CD4-positive, alpha-beta T cell (primary cell): ENCODE measurements at regions of chr5 and their contacts with region 1.

Region 1: GRCh38 chr5:39106322-39106721 is 32.1 kb upstream of the RICTOR start:
- DNase-seq: peak in 3 of 14 experiments; percentile 21 to 36 (median 35)
- ATAC-seq: no peak
- H3K4me3 ChIP-seq: no peak overlapping the region
- H3K4me3 Mint-ChIP-seq: no peak overlapping the region
- H3K27ac ChIP-seq: no peak overlapping the region
- H3K27ac Mint-ChIP-seq: peak overlapping the region; percentile 70
- H3K4me1 ChIP-seq: peaks cover under 1% of the 10 kb centered on the region
- H3K4me1 Mint-ChIP-seq: peaks cover 39% of the 10 kb centered on the region
- H3K27me3 ChIP-seq: no peaks in the 10 kb centered on the region
- H3K27me3 Mint-ChIP-seq: no peaks in the 10 kb centered on the region
- CTCF ChIP-seq: peak; percentile 49

Region 2: DNA sequence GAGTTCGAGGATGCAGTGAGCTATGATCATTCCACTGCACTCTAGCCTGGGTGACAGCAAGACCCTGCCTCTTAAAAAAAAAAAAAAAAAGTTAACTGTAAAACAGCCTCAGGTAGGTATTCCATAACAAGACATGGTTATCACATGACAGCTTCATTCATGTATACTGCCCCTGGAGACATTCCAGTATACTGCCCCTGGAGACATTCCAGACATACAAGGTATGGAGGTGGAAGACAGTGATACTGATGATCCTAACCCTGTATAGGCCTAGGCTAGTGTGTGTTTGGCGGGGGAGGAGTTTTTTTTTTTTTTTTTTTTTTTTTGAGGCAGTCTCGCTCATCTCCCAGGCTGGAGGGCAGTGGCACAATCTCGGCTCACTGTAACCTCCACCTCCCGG is 137.7 kb before region 1 on chr5:
- CTCF ChIA-PET with region 1: no interaction called
- POLR2A ChIA-PET with region 1: interaction called, 3 read pairs
- intact Hi-C with region 1: loop called in 1 of 2 experiments (anchors 5 kb)
- DNase-seq: no peak
- ATAC-seq: no peak
- H3K4me3 ChIP-seq: no peak overlapping the region
- H3K4me3 Mint-ChIP-seq: no peak overlapping the region
- H3K27ac ChIP-seq: no peak overlapping the region
- H3K27ac Mint-ChIP-seq: no peak overlapping the region
- H3K4me1 ChIP-seq: no peaks in the 10 kb centered on the region
- H3K4me1 Mint-ChIP-seq: no peaks in the 10 kb centered on the region
- H3K27me3 ChIP-seq: no peaks in the 10 kb centered on the region
- H3K27me3 Mint-ChIP-seq: no peaks in the 10 kb centered on the region
- CTCF ChIP-seq: no peak

Region 3: DNA sequence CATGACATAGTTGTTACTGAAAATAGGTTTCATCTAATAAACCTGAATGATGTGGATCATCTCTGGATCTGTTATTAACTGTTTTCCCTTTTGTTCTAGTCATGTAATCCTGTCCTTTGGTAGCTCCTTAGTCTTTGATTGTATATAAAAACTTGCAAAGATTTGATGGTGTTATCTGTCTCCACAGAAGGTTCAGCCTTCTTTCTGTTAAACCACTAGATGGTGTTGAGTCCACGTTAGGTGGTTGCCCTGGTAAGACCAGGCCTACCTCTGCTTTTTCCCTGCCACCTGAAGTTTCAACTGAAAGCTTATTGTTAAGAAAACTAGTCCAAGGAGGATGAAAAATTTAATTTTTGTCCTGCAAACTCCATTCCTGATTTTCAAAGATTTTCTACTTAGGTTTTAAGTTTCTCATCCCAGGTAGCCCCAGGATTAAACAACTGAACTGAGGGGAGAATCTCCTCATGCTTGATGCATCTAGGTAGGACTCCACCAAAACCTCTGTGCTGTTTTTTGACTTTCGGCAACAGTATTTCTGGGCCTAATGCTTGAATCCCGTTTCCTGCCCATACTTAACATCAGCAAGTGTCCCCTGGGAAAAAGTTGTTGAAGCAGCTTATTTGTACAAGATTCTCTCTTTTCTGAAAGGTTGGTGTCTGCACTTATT is 100.6 kb before region 1 on chr5:
- CTCF ChIA-PET with region 1: interaction called, 8 read pairs
- POLR2A ChIA-PET with region 1: no interaction called
- intact Hi-C with region 1: loop called (anchors 5 kb)
- DNase-seq: peak in 4 of 14 experiments; percentile 20 to 59 (median 48)
- ATAC-seq: peak; percentile 86
- H3K4me3 ChIP-seq: no peak overlapping the region
- H3K4me3 Mint-ChIP-seq: no peak overlapping the region
- H3K27ac ChIP-seq: no peak overlapping the region
- H3K27ac Mint-ChIP-seq: peak overlapping the region; percentile 64
- H3K4me1 ChIP-seq: peaks cover 4% of the 10 kb centered on the region
- H3K4me1 Mint-ChIP-seq: peaks cover 61% of the 10 kb centered on the region
- H3K27me3 ChIP-seq: no peaks in the 10 kb centered on the region
- H3K27me3 Mint-ChIP-seq: no peaks in the 10 kb centered on the region
- CTCF ChIP-seq: peak; percentile 64

Region 4: GRCh38 chr5:39905356-39905755 is 799.0 kb after region 1 on chr5:
- CTCF ChIA-PET with region 1: no interaction called
- POLR2A ChIA-PET with region 1: no interaction called
- intact Hi-C with region 1: no loop called
- DNase-seq: no peak
- ATAC-seq: no peak
- H3K4me3 ChIP-seq: no peak overlapping the region
- H3K4me3 Mint-ChIP-seq: no peak overlapping the region
- H3K27ac ChIP-seq: no peak overlapping the region
- H3K27ac Mint-ChIP-seq: no peak overlapping the region
- H3K4me1 ChIP-seq: no peaks in the 10 kb centered on the region
- H3K4me1 Mint-ChIP-seq: no peaks in the 10 kb centered on the region
- H3K27me3 ChIP-seq: peaks cover 3 to 4% of the 10 kb centered on the region in 2 experiments
- H3K27me3 Mint-ChIP-seq: peaks cover 37% of the 10 kb centered on the region
- CTCF ChIP-seq: no peak